Heart left ventricle (tissue), 16 donors: ENCODE measurements at regions of chr13 and their contacts with region 1.

Region 1: GRCh38 chr13:43905435-43906031 is 25.8 kb downstream of the LACC1 start:
- DNase-seq: peak in 1 of 5 donors; percentile 14
- ATAC-seq: peak in 3 of 4 donors; percentile 65 to 71 (median 66)
- H3K4me3 ChIP-seq: no peak overlapping the region
- H3K27ac ChIP-seq: no peak overlapping the region
- H3K4me1 ChIP-seq: peaks cover 0 to 14% (median 0%) of the 10 kb centered on the region in 12 donors
- H3K27me3 ChIP-seq: peaks cover 0 to 6% (median 0%) of the 10 kb centered on the region in 9 donors
- CTCF ChIP-seq: peak; percentile 61 to 87 (median 82)
- POLR2A ChIP-seq: no peak

Region 2: GRCh38 chr13:44045180-44045562 is 139.6 kb after region 1 on chr13:
- intact Hi-C with region 1: loop called (anchors 2 to 5 kb)
- DNase-seq: no peak
- ATAC-seq: no peak
- H3K4me3 ChIP-seq: no peak overlapping the region
- H3K27ac ChIP-seq: no peak overlapping the region
- H3K4me1 ChIP-seq: peaks cover 0 to 5% (median 0%) of the 10 kb centered on the region in 12 donors
- H3K27me3 ChIP-seq: peaks cover 0 to 2% (median 0%) of the 10 kb centered on the region in 9 donors
- CTCF ChIP-seq: no peak
- POLR2A ChIP-seq: no peak

Region 3: DNA sequence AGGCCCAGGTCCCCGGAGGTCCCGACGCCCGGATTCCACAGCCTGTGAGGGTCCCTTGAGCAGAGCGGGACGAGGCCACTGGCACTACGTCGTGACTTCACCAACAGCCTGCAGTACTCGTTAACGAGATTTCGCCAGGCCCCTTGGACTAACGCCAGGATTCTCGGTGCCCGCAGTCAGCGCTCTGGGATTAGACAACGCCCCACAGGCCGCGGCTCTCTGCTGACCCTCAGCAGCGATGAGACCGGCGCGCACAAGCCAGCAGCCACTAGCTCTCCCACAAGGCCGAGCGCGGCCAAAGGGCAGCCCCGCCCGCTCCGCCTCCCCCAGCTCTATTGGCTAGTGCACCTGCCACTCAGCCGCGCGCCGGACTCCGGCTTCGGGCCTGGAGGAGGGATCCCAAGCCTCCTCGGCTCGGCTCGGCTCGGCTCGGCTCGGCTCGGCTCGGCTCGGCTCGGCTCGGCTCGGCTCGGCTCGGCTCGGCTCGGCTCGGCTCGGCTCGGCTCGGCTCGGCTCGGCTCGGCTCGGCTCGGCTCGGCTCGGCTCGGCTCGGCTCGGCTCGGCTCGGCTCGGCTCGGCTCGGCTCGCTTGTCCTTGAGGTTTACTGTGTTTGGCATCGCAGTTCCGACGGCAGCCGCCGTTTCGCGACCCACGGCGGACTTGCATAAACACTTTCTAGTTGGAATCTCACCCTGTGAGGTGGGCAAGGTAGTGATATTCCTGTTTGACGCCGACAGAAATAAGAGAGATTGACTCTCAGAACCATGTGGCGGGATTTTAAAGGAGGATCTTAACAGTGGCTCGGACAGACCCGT is 236.4 kb after region 1 on chr13:
- intact Hi-C with region 1: loop called in 3 of 10 experiments (anchors 2 to 10 kb)
- DNase-seq: peak; percentile 98 to 100 (median 98)
- ATAC-seq: peak; percentile 99 to 100 (median 100)
- H3K4me3 ChIP-seq: peak overlapping the region; percentile 28 to 73 (median 58)
- H3K27ac ChIP-seq: peak overlapping the region; percentile 86 to 99 (median 96)
- H3K4me1 ChIP-seq: peaks cover 0 to 21% (median 9%) of the 10 kb centered on the region in 12 donors
- H3K27me3 ChIP-seq: no peaks in the 10 kb centered on the region
- CTCF ChIP-seq: peak in 1 of 12 donors; percentile 16
- POLR2A ChIP-seq: peak; percentile 84 to 94

Region 4: GRCh38 chr13:44237276-44237767 is 331.8 kb after region 1 on chr13:
- intact Hi-C with region 1: loop called in 2 of 10 experiments (anchors 5 to 10 kb)
- DNase-seq: peak in 4 of 5 donors; percentile 81 to 86 (median 83)
- ATAC-seq: peak; percentile 98 to 99 (median 99)
- H3K4me3 ChIP-seq: peak overlapping the region in 1 of 12 donors; percentile 0
- H3K27ac ChIP-seq: peak overlapping the region; percentile 79 to 97 (median 88)
- H3K4me1 ChIP-seq: peaks cover 14 to 38% (median 26%) of the 10 kb centered on the region in 12 donors
- H3K27me3 ChIP-seq: no peaks in the 10 kb centered on the region
- CTCF ChIP-seq: no peak
- POLR2A ChIP-seq: peak in 1 of 2 donors; percentile 49

Region 5: DNA sequence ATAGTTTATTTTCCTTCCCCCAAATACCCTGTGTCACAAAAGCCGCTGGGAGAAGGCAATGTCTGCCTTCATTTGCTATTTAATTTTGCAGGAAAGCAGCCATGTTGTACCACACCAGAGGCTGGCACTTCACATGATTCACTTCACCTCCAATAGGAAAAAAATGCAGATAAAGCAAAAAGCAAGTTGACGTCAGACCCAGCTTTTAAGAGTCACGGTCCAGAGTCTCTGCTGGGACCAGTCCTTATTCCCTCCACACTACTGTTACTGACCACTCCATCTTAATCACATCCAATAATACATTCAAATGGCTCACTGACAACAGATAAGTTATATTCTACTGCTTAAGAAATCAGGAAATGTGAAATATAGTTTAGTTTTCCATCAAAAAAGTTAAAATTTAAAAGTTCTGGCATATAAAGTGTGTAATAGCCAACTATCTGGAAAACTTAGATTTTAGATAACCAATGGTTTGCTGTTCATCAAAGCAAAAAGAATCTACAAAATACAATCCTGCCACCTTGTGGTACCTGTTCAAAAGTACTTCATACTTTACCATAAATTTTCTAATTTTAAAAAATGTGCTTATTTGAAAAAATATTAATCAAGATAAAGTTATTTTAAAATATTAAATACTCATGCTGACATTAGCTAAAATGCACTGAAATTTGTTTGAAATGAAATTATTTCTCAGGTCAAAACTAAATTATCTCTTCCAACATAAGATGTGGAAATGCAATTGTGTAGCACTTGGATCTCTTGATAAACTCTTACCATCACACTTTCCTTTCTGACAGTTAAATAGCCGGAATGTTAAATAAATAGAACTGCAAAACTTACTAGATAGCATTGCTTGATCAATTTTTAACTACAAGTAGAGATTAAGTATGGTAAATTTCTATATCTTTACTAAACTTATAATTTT is 565.4 kb after region 1 on chr13:
- intact Hi-C with region 1: loop called in 8 of 10 experiments (anchors 1 to 10 kb)
- DNase-seq: no peak
- ATAC-seq: no peak
- H3K4me3 ChIP-seq: no peak overlapping the region
- H3K27ac ChIP-seq: no peak overlapping the region
- H3K4me1 ChIP-seq: peaks cover 0 to 15% (median 8%) of the 10 kb centered on the region in 12 donors
- H3K27me3 ChIP-seq: no peaks in the 10 kb centered on the region
- CTCF ChIP-seq: peak; percentile 38 to 66 (median 57)
- POLR2A ChIP-seq: no peak